T-cell (primary cell): ENCODE measurements at regions of chr4 and their contacts with region 1.

Region 1: DNA sequence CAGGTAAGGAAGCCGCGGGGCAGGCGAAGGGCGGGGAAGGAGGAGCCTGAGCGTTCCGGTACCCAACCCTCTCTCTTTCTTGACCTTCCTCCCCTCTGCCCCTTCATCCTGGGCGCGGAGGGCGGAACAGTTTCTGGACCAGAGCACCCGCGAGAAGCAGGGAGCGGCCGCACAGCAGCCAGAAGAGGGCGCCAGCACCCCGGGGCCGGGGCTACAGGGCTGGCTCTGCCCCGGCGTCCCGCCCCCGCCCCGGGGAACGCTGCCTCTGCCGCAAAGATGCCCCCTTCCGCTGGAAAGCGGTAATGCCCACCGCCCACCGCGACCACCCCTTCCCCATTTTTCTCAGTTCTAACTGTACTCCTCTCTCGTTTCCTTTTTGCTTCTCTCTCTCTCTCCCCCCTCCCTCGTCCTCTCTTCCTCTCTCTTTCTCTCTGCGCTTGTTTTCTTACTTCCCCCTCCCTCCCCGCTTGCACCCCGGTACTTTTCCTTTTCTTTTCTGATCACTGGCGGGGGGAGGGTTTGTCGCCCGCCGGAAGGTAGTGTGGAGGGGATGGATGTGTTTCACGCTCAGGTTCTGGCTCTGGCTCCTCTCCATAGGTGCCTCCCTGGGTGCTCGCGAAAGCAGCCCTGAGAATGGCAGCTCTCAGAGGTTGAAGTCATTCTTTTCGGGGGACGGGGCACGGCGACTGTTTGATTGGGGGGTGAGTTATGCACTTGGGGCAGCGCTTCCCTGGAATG is 13.1 kb upstream of the PRDM8 start:
- DNase-seq: peak; percentile 72 to 97 (median 89)
- ATAC-seq: peak; percentile 88 to 93 (median 90)
- H3K4me3 ChIP-seq: peak overlapping the region; percentile 76 to 97
- H3K4me3 Mint-ChIP-seq: peak overlapping the region; percentile 86 to 100 (median 99)
- H3K27ac ChIP-seq: peak overlapping the region; percentile 94
- H3K27ac Mint-ChIP-seq: peak overlapping the region; percentile 99
- H3K4me1 ChIP-seq: peaks cover 22 to 34% of the 10 kb centered on the region in 2 experiments
- H3K4me1 Mint-ChIP-seq: peaks cover 53 to 56% (median 54%) of the 10 kb centered on the region in 3 donors
- H3K27me3 ChIP-seq: peaks cover 0 to 4% of the 10 kb centered on the region in 2 experiments
- H3K27me3 Mint-ChIP-seq: peaks cover 0 to 3% of the 10 kb centered on the region in 2 donors

Region 2: DNA sequence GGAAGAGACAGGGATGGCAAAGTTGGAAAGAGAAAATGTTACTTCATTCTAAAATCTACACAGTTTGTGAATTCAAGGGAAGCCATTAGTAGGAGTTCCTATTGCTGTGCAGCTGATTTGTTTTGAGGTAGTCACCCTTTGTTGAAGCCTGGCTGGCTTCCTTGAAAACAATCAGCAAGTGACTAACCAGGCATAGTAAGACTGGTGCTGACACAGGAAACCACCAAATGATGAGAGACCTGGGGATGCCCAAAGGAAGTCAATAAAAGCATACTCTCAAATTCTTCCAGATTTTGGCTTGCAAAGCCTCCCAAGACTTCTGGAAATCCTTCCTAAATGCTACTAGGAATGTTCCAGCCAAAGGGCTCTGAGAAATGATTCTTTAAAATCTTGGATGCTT is 10.8 kb before region 1 on chr4:
- CTCF ChIA-PET with region 1: interaction called, 19 to 45 read pairs
- POLR2A ChIA-PET with region 1: interaction called, 3 to 4 read pairs
- DNase-seq: peak in 31 of 35 experiments; percentile 18 to 86 (median 50)
- ATAC-seq: peak; percentile 96 to 98 (median 96)
- H3K4me3 ChIP-seq: no peak overlapping the region
- H3K4me3 Mint-ChIP-seq: peak overlapping the region; percentile 34 to 76 (median 35)
- H3K27ac ChIP-seq: peak overlapping the region; percentile 93
- H3K27ac Mint-ChIP-seq: peak overlapping the region; percentile 94 to 99
- H3K4me1 ChIP-seq: peaks cover 33 to 41% of the 10 kb centered on the region in 2 experiments
- H3K4me1 Mint-ChIP-seq: peaks cover 63 to 71% (median 70%) of the 10 kb centered on the region in 3 donors
- H3K27me3 ChIP-seq: no peaks in the 10 kb centered on the region
- H3K27me3 Mint-ChIP-seq: no peaks in the 10 kb centered on the region